Posterior cingulate gyrus (tissue), 11 donors: ENCODE measurements at regions of chr10 and their contacts with region 1.

Region 1: GRCh38 chr10:62268399-62269114 is at the start of gene RTKN2:
- DNase-seq: peak; percentile 47 to 95 (median 74)

Region 2: GRCh38 chr10:62399211-62399610 is 130.7 kb after region 1 on chr10:
- intact Hi-C with region 1: loop called (anchors 10 kb)
- DNase-seq: no peak